GM12878 (cell line): ENCODE measurements at regions of chr11 and their contacts with region 1.

Region 1: GRCh38 chr11:9626496-9627394 is 37.1 kb upstream of the SWAP70 start:
- DNase-seq: no peak
- ATAC-seq: peak; percentile 73
- H3K4me3 ChIP-seq: no peak overlapping the region
- H3K27ac ChIP-seq: no peak overlapping the region
- H3K4me1 ChIP-seq: peaks cover 36% of the 10 kb centered on the region
- H3K27me3 ChIP-seq: no peaks in the 10 kb centered on the region
- CTCF ChIP-seq: no peak
- EP300 ChIP-seq: 0 out of 4 replicates have a peak, but pooled peaks of 1 of the 2 experiments have one; percentile 19
- POLR2A ChIP-seq: no peak
- RAD21 ChIP-seq: no peak

Region 2: DNA sequence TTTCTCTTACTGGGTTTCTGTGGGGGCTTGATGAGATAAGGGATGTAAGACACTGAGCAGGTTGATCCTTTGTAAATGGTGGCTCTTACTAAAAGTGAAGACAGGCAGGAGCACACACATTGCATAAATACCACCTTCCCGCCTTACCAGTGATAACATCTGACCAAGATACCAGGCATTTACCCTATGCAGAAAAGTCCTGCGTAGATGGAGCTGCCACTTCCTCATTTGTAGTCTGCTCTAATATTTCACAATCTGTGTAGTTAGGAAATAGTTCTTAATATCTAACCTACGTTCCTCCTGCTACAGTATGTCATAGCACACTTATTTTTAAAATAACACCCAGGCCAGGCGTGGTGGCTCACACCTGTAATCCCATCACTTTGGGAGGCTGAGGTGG is 13.2 kb after region 1 on chr11:
- CTCF ChIA-PET with region 1: interaction called, 12 read pairs
- POLR2A ChIA-PET with region 1: interaction called, 4 read pairs
- RAD21 ChIA-PET with region 1: interaction called, 7 read pairs
- SMC1A ChIA-PET with region 1: interaction called, 10 read pairs
- in situ Hi-C with region 1: no loop called
- intact Hi-C with region 1: no loop called
- DNase-seq: no peak
- ATAC-seq: no peak
- H3K4me3 ChIP-seq: no peak overlapping the region
- H3K27ac ChIP-seq: no peak overlapping the region
- H3K4me1 ChIP-seq: peaks cover 11% of the 10 kb centered on the region
- H3K27me3 ChIP-seq: no peaks in the 10 kb centered on the region
- CTCF ChIP-seq: no peak
- EP300 ChIP-seq: no peak
- POLR2A ChIP-seq: no peak
- RAD21 ChIP-seq: no peak

Region 3: DNA sequence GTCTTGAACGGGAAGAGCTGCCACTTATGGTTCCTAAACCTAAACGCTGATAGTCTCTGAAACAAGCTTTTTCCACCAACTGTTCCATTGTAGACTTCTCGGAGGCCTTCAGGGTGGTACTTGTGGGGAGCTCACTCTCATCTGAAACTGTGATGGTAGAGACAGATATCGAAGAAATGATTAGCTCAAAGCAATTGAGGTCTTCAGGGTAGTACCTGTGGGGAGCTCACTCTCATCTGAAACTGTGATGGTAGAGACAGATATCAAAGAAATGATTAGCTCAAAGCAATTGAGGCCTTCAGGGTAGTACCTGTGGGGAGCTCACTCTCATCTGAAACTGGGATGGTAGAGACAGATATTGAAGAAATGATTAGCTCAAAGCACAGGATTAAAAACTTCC is 212.8 kb after region 1 on chr11:
- CTCF ChIA-PET with region 1: no interaction called
- POLR2A ChIA-PET with region 1: no interaction called
- RAD21 ChIA-PET with region 1: no interaction called
- SMC1A ChIA-PET with region 1: no interaction called
- in situ Hi-C with region 1: no loop called
- intact Hi-C with region 1: no loop called
- DNase-seq: no peak
- ATAC-seq: peak; percentile 26; the same call in 2 of the 3 replicates
- H3K4me3 ChIP-seq: no peak overlapping the region
- H3K27ac ChIP-seq: no peak overlapping the region
- H3K4me1 ChIP-seq: peaks cover 14% of the 10 kb centered on the region
- H3K27me3 ChIP-seq: no peaks in the 10 kb centered on the region
- CTCF ChIP-seq: no peak
- EP300 ChIP-seq: no peak
- POLR2A ChIP-seq: no peak
- RAD21 ChIP-seq: no peak

Region 4: DNA sequence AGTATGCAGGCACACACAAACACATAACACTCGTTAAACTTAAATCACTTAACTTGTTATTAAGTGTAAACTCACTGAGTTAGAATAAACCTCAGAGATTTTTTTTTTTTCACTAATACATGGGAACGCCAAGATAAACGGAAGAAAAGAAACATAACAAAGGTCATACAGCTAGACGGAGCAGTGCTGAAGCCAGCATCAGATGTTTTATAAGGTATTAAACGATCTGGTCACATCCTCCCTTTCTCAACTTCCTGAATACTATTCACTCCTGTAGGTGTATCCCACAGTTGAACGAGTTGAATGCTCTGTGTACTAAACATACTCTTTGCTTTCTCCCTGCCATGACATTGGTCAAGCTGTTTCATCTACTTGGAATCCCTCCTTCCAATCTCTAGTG is 249.1 kb after region 1 on chr11:
- CTCF ChIA-PET with region 1: no interaction called
- POLR2A ChIA-PET with region 1: no interaction called
- RAD21 ChIA-PET with region 1: no interaction called
- SMC1A ChIA-PET with region 1: no interaction called
- in situ Hi-C with region 1: no loop called
- intact Hi-C with region 1: no loop called
- DNase-seq: no peak
- ATAC-seq: no peak
- H3K4me3 ChIP-seq: no peak overlapping the region
- H3K27ac ChIP-seq: no peak overlapping the region
- H3K4me1 ChIP-seq: no peaks in the 10 kb centered on the region
- H3K27me3 ChIP-seq: no peaks in the 10 kb centered on the region
- CTCF ChIP-seq: no peak
- EP300 ChIP-seq: no peak
- POLR2A ChIP-seq: no peak
- RAD21 ChIP-seq: no peak